ENCODE measurements at regions of chr2 and their contacts with region 1.

Region 1: DNA sequence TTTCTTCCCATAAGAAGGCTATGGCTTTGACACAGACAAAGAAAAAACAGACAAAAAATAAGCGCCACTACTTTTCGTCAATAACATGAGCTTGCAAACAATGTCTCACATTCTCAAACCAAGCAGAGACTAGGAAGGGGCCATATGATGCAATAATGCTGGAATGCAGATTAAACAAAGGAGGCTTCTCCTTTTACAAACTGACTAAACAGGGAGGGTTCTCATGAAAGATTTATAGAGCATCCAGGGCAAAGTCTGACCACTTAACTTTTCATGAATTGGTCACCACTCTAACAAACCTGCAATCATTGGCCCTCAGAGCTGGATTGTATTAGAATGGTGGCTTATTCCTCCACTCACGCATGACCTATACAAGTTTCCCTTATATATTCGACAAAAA is 663.3 kb upstream of the CHAC2 start:
- DNase-seq: peak; percentile 95
- ATAC-seq: peak; percentile 95
- H3K4me3 ChIP-seq: no peak overlapping the region
- H3K27ac ChIP-seq: peak overlapping the region; percentile 71
- H3K4me1 ChIP-seq: peaks cover 21% of the 10 kb centered on the region
- H3K27me3 ChIP-seq: no peaks in the 10 kb centered on the region
- CTCF ChIP-seq: no peak

Region 2: DNA sequence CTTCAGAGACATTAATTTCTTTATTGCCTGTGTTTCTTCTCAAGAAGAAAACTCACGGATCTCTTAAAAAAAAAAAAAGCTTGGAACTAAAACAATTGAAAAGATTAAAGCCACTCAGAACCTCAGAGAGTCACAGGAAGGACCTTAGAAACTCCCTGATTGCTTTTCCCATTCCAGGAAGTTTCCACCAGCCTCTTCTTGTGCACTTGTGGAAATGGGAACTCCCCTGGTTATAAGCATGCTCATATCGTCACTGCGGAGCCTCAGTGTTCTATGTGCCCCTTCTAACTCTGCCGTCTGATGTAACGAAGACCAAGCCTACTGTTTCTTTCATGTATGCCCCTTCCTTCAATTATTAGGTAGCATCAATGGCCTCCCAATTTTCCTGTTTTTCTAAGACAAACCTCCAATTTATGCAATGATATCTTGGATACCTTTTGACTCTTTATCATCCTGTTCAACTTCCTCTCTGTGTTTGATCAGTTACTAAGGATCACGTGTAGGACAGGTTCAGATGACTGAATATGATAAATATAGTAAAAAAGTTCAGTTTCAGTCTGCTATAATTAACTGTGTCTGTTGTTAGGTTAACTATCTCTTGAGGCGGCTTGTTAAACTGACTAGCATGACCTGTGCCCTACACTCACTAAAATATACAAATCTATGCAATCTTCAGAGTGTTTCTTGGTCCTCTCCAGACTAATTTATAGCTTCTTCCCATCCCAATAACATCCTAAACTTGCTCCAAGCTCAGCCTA is 69.6 kb after region 1 on chr2:
- CTCF ChIA-PET with region 1: no interaction called
- POLR2A ChIA-PET with region 1: no interaction called
- intact Hi-C with region 1: loop called (anchors 2 kb)
- DNase-seq: no peak
- ATAC-seq: peak; percentile 52
- H3K4me3 ChIP-seq: no peak overlapping the region
- H3K27ac ChIP-seq: no peak overlapping the region
- H3K4me1 ChIP-seq: peaks cover 9% of the 10 kb centered on the region
- H3K27me3 ChIP-seq: no peaks in the 10 kb centered on the region
- CTCF ChIP-seq: no peak

Measured in PC-3 (cell line).